Activated B cell treated with CpG ODN at 0.5 μM for 24 hours (primary cell): ENCODE measurements at regions of chr19 and their contacts with region 1.

Region 1: DNA sequence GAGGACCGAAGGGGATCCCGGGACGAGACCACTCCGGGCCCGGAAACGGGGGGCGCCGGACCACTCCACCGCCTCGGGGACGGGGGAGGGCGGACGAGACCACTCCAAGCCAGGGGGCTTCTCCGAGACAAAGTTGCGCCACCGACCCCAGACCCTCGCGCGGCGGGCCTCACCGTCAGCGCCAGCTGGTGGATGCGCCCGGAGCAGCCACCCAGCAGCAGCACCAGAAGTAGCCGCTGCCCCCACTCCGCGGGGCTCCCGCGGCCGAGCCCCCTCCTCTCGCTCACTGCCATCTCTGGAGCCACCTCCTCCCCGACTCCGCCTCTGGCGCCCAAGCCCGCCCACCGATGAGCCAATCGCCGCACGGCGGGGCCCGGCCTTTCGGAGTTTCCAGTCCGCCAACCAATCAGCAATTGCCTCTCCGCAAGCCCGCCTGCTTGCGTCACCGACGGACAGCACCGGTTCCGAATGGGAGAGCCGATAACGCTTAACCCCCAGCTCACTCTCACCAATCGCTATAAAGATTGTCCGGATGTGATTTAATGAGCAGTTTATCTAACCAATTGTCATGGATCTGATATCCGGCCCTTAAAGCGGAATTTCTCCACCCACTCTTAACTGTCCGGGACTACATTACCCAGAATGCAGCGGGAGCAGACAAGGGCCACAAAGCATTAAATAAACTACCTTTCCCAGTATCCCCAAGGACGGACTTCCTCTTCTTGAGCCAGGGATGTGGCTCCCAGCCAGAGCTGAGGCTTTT is at the start of gene GPR108:
- DNase-seq: peak; percentile 98
- ATAC-seq: peak; percentile 74
- H3K4me3 Mint-ChIP-seq: peak within 1 kb of the TSS; percentile 96
- H3K27ac Mint-ChIP-seq: peak within 1 kb of the TSS; percentile 96
- H3K4me1 Mint-ChIP-seq: peaks cover 44% of the 10 kb centered on the region
- H3K27me3 Mint-ChIP-seq: no peaks in the 10 kb centered on the region
- CTCF ChIP-seq: no peak
- total RNA-seq, gene GPR108: 53.5 and 55.6 TPM in 2 replicates

Region 2: DNA sequence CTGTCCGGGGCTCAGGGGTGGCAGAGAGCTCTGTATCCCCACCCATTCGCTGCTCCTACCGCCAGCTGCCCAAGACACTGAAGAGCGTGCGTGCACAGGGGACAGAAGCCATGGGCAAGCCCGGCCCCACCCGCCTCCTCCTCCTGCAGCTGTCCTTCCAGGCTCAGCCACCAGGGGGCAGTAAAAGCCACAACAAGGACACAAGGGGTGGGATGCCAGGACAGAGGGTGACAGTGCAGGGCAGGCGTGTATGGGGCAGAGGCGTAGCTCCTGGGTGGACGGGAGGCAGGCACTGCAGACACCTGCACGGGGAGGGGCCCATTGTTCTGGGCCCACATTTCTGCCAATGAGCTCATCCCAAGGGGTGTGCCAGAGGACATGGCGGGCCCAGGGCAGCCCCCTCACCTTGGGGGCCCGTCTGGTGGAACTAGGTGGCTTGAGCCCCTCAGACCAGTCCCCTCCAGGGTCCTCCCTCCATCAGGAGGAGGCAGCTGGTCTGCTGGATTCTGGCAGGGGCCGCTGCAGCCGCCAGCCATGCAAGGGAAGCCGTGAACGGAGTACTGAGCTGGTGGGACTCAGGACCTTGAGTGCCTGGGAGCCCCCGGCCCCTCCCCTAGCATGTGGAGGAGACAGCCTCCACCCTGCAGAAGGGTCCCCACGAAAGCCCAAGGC is 518.8 kb before region 1 on chr19:
- CTCF ChIA-PET with region 1: no interaction called
- POLR2A ChIA-PET with region 1: no interaction called
- intact Hi-C with region 1: loop called (anchors 5 kb)
- DNase-seq: peak; percentile 79
- ATAC-seq: peak; percentile 90
- H3K4me3 Mint-ChIP-seq: no peak overlapping the region
- H3K27ac Mint-ChIP-seq: no peak overlapping the region
- H3K4me1 Mint-ChIP-seq: no peaks in the 10 kb centered on the region
- H3K27me3 Mint-ChIP-seq: no peaks in the 10 kb centered on the region
- CTCF ChIP-seq: no peak

Region 3: DNA sequence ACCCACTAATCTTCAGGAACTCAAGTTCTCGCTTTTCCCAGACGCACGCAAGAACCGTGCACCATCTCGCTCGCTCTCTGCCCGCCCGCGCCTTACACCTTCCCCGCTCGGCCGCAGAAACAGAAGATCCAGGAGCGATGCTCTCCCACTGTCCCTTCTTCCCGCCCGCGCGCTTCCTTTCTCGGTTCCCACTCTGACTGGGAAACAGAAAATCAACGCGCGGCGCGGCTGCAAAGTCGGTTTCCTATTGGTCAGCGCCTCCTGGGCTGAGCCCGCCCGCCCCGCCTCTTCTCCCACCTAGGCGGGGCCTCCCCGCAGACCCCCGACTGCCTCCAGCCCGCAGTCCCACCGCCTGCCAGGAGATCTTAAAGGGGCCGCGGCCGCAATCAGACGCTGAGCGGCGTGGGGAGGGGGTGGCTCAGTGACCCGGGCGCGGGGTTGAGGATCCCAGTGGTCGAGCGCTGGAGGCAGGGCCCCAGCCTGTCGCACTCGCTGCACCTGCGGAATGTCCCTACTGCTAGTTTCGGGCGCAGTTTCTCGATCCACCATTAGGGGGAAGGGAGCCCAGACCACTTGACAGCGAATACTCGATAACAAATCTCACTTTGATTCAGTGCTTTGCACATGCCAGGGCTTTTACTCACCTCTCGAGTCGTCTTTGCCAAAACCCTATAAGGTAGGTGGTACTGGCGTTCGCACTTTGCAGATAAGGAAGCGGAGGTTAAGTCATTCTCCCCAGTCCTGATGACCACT is 277.2 kb before region 1 on chr19:
- CTCF ChIA-PET with region 1: no interaction called
- POLR2A ChIA-PET with region 1: no interaction called
- intact Hi-C with region 1: loop called (anchors 1 kb)
- DNase-seq: peak; percentile 90
- ATAC-seq: peak; percentile 82
- H3K4me3 Mint-ChIP-seq: peak overlapping the region; percentile 90
- H3K27ac Mint-ChIP-seq: peak overlapping the region; percentile 79
- H3K4me1 Mint-ChIP-seq: peaks cover 42% of the 10 kb centered on the region
- H3K27me3 Mint-ChIP-seq: peaks cover 3% of the 10 kb centered on the region
- CTCF ChIP-seq: no peak

Region 4: GRCh38 chr19:6632002-6632621 is 105.4 kb before region 1 on chr19:
- CTCF ChIA-PET with region 1: interaction called, 9 read pairs
- POLR2A ChIA-PET with region 1: interaction called, 3 read pairs
- intact Hi-C with region 1: loop called (anchors 1 kb)
- DNase-seq: peak; percentile 25
- ATAC-seq: peak; percentile 81
- H3K4me3 Mint-ChIP-seq: no peak overlapping the region
- H3K27ac Mint-ChIP-seq: peak overlapping the region; percentile 26
- H3K4me1 Mint-ChIP-seq: peaks cover 29% of the 10 kb centered on the region
- H3K27me3 Mint-ChIP-seq: peaks cover 2% of the 10 kb centered on the region
- CTCF ChIP-seq: peak; percentile 65

Region 5: GRCh38 chr19:6723108-6723618 is 14.3 kb before region 1 on chr19:
- CTCF ChIA-PET with region 1: interaction called, 3 read pairs
- POLR2A ChIA-PET with region 1: interaction called, 7 read pairs
- intact Hi-C with region 1: loop called (anchors 2 kb)
- DNase-seq: no peak
- ATAC-seq: no peak
- H3K4me3 Mint-ChIP-seq: no peak overlapping the region
- H3K27ac Mint-ChIP-seq: peak overlapping the region; percentile 50
- H3K4me1 Mint-ChIP-seq: peaks cover 56% of the 10 kb centered on the region
- H3K27me3 Mint-ChIP-seq: no peaks in the 10 kb centered on the region
- CTCF ChIP-seq: no peak

Region 6: DNA sequence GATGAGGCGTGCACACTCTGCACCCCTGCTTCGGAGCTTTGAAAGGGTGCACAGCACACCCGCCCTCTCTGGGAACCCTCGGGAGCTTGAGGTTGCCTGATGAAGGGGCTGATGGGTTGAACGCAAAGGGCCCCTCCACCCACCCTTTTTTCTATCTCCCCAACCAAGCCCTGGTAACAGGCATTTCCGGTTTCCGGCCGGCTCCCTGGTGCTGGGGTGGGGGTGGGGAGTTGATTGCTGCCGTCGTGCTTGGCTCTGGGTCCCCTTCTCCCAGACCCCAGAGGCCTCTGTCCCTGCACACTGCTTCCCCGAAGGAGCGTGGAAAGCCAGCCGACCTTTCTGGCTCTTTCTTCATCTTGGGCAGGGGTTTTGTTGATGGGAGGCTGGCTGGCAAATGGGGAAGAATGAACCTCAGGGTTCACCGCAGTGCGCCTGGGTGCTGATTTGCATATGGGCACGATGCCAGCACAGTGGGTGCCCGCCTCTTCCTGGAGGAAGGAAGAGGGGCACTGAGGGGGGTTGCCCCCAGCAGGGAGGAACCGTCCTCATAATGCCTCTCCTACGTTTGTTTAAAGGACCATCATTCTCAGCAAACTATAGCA is 64.1 kb after region 1 on chr19:
- CTCF ChIA-PET with region 1: interaction called, 32 read pairs
- POLR2A ChIA-PET with region 1: interaction called, 81 read pairs
- intact Hi-C with region 1: loop called (anchors 1 kb)
- DNase-seq: peak; percentile 89
- ATAC-seq: peak; percentile 71
- H3K4me3 Mint-ChIP-seq: peak overlapping the region; percentile 83
- H3K27ac Mint-ChIP-seq: peak overlapping the region; percentile 94
- H3K4me1 Mint-ChIP-seq: peaks cover 83% of the 10 kb centered on the region
- H3K27me3 Mint-ChIP-seq: no peaks in the 10 kb centered on the region
- CTCF ChIP-seq: no peak